ENCODE measurements at regions of chr14 and their contacts with region 1.

Region 1: GRCh38 chr14:58297762-58298476 is 436 bp upstream of the ARID4A start:
- DNase-seq: peak; percentile 95
- CTCF ChIP-seq: no peak

Region 2: GRCh38 chr14:58244556-58245387 is 53.1 kb before region 1 on chr14 and contains the start of gene PSMA3:
- CTCF ChIA-PET with region 1: interaction called, 3 read pairs
- POLR2A ChIA-PET with region 1: interaction called, 11 read pairs
- DNase-seq: peak; percentile 93
- CTCF ChIP-seq: no peak

Region 3: GRCh38 chr14:58275527-58276190 is 22.3 kb before region 1 on chr14:
- CTCF ChIA-PET with region 1: no interaction called
- POLR2A ChIA-PET with region 1: interaction called, 12 read pairs
- DNase-seq: no peak
- CTCF ChIP-seq: no peak

Region 4: DNA sequence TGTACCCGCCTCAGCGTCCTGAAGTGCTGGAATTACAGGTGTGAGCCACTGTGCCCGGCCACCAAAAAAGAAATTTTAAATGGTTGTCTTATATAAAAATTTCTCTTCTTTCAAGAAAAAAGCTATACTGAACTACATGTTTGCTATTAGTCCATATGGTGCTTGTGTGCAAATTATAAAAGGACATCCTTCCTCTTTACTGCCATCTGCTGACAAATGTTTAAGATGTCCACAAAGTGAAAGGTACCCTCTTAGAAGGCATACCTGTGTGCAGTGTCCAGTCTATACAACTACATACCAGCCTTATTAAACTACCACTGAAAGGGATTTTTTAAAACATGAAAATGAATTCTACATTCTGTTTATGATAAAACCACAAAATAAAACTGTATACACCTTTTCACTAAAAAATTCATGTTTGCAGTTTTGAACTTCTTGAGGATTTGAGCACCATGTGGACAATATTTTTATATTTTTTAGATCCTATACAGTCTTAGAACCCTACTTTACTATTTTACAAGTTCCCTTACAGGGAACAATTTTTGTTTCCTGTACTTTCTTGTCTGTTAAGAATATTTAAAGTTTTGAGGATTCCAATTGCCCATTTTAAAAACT is 65.0 kb after region 1 on chr14:
- CTCF ChIA-PET with region 1: no interaction called
- POLR2A ChIA-PET with region 1: no interaction called
- DNase-seq: peak; percentile 25
- CTCF ChIP-seq: peak; percentile 14